ENCODE measurements at regions of chr2 and their contacts with region 1.

Region 1: GRCh38 chr2:68709421-68709911 is 25.1 kb upstream of the ARHGAP25 start:
- DNase-seq: no peak
- ATAC-seq: peak; percentile 96
- H3K4me3 Mint-ChIP-seq: no peak overlapping the region
- H3K27ac Mint-ChIP-seq: no peak overlapping the region
- H3K4me1 Mint-ChIP-seq: peaks cover 6% of the 10 kb centered on the region
- H3K27me3 Mint-ChIP-seq: no peaks in the 10 kb centered on the region
- CTCF ChIP-seq: peak; percentile 51; the same call in 1 of the 2 replicates

Region 2: GRCh38 chr2:68487773-68488355 is 221.6 kb before region 1 on chr2:
- CTCF ChIA-PET with region 1: interaction called, 19 read pairs
- POLR2A ChIA-PET with region 1: no interaction called
- DNase-seq: no peak
- ATAC-seq: no peak
- H3K4me3 Mint-ChIP-seq: no peak overlapping the region
- H3K27ac Mint-ChIP-seq: no peak overlapping the region
- H3K4me1 Mint-ChIP-seq: no peaks in the 10 kb centered on the region
- H3K27me3 Mint-ChIP-seq: no peaks in the 10 kb centered on the region
- CTCF ChIP-seq: no peak

Region 3: GRCh38 chr2:68689553-68690537 is 19.6 kb before region 1 on chr2:
- CTCF ChIA-PET with region 1: interaction called, 10 read pairs
- POLR2A ChIA-PET with region 1: no interaction called
- DNase-seq: no peak
- ATAC-seq: peak; percentile 46
- H3K4me3 Mint-ChIP-seq: 0 out of 2 replicates have a peak overlapping the region, but pooled peaks have one; percentile 11
- H3K27ac Mint-ChIP-seq: peak overlapping the region; percentile 69
- H3K4me1 Mint-ChIP-seq: peaks cover 58% of the 10 kb centered on the region
- H3K27me3 Mint-ChIP-seq: no peaks in the 10 kb centered on the region
- CTCF ChIP-seq: no peak

Region 4: GRCh38 chr2:68742626-68743415 is 33.4 kb after region 1 on chr2:
- CTCF ChIA-PET with region 1: interaction called, 16 read pairs
- POLR2A ChIA-PET with region 1: no interaction called
- DNase-seq: no peak
- ATAC-seq: no peak
- H3K4me3 Mint-ChIP-seq: no peak overlapping the region
- H3K27ac Mint-ChIP-seq: no peak overlapping the region
- H3K4me1 Mint-ChIP-seq: peaks cover 31% of the 10 kb centered on the region
- H3K27me3 Mint-ChIP-seq: no peaks in the 10 kb centered on the region
- CTCF ChIP-seq: no peak

Region 5: DNA sequence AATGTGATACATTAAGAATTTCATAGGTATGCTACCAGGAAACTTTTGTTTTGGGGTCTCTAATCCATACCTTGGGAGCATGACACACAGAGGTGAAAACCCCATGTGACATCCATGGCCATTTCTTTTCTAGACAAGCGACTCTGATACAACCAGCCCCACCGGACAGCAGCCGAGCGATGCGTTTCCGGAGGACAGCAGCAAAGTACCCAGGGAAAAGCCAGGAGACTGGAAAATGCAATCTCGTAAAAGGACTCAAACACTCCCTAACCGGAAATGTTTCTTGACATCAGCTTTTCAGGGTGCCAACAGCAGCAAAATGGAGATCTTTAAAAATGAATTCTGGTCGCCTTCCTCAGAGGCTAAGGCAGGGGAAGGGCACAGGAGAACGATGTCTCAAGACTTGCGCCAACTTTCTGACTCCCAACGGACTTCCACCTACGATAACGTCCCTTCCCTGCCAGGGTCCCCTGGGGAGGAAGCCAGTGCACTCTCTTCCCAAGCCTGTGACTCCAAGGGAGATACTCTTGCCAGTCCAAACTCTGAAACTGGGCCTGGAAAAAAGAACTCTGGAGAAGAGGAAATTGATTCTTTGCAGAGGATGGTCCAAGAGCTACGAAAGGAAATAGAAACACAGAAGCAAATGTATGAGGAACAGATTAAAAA is 112.9 kb after region 1 on chr2:
- CTCF ChIA-PET with region 1: no interaction called
- POLR2A ChIA-PET with region 1: no interaction called
- DNase-seq: no peak
- ATAC-seq: no peak
- H3K4me3 Mint-ChIP-seq: no peak overlapping the region
- H3K27ac Mint-ChIP-seq: no peak overlapping the region
- H3K4me1 Mint-ChIP-seq: peaks cover 7% of the 10 kb centered on the region
- H3K27me3 Mint-ChIP-seq: no peaks in the 10 kb centered on the region; the same call in 1 of the 2 replicates
- CTCF ChIP-seq: no peak

Region 6: GRCh38 chr2:68909793-68910674 is 200.6 kb after region 1 on chr2:
- CTCF ChIA-PET with region 1: interaction called, 10 read pairs
- POLR2A ChIA-PET with region 1: no interaction called
- DNase-seq: peak; percentile 80
- ATAC-seq: peak; percentile 63
- H3K4me3 Mint-ChIP-seq: no peak overlapping the region
- H3K27ac Mint-ChIP-seq: peak overlapping the region; percentile 85
- H3K4me1 Mint-ChIP-seq: peaks cover 27% of the 10 kb centered on the region
- H3K27me3 Mint-ChIP-seq: no peaks in the 10 kb centered on the region
- CTCF ChIP-seq: peak; percentile 90

Region 7: GRCh38 chr2:69643602-69644505 is 934.4 kb after region 1 on chr2 and contains the start of gene AAK1:
- CTCF ChIA-PET with region 1: no interaction called
- POLR2A ChIA-PET with region 1: no interaction called
- DNase-seq: peak; percentile 81
- ATAC-seq: peak; percentile 69
- H3K4me3 Mint-ChIP-seq: peak within 1 kb of the TSS; percentile 91
- H3K27ac Mint-ChIP-seq: peak within 1 kb of the TSS; percentile 91
- H3K4me1 Mint-ChIP-seq: peaks cover 47% of the 10 kb centered on the region
- H3K27me3 Mint-ChIP-seq: peaks cover 12% of the 10 kb centered on the region
- CTCF ChIP-seq: no peak
- total RNA-seq, gene AAK1: 32.3 to 35.7 TPM (median 35.6 TPM) in 3 replicates